HepG2 (cell line): ENCODE measurements at regions of chr14 and their contacts with region 1.

Region 1: GRCh38 chr14:59464486-59465315 is 479 bp downstream of the GPR135 start:
- DNase-seq: peak; percentile 24
- ATAC-seq: peak; percentile 85
- H3K4me3 ChIP-seq: peak overlapping the region; percentile 53 to 77 (median 77)
- H3K27ac ChIP-seq: peak overlapping the region; percentile 64
- H3K4me1 ChIP-seq: peaks cover 22% of the 10 kb centered on the region
- H3K27me3 ChIP-seq: no peaks in the 10 kb centered on the region
- CTCF ChIP-seq: peak; percentile 4
- EP300 ChIP-seq: no peak
- POLR2A ChIP-seq: no peak
- RAD21 ChIP-seq: 0 out of 2 replicates have a peak, but pooled peaks have one; percentile 17

Region 2: GRCh38 chr14:59483900-59484638 is 19.4 kb after region 1 on chr14 and contains the starts of genes JKAMP and L3HYPDH:
- CTCF ChIA-PET with region 1: no interaction called
- POLR2A ChIA-PET with region 1: interaction called, 18 read pairs
- in situ Hi-C with region 1: no loop called
- intact Hi-C with region 1: loop called (anchors 1 kb)
- DNase-seq: peak; percentile 92
- ATAC-seq: peak; percentile 93
- H3K4me3 ChIP-seq: peak within 1 kb of the TSS; percentile 78 to 87 (median 83)
- H3K27ac ChIP-seq: peak within 1 kb of the TSS; percentile 96
- H3K4me1 ChIP-seq: peaks cover 46% of the 10 kb centered on the region
- H3K27me3 ChIP-seq: peaks cover 0 to 4% of the 10 kb centered on the region in 2 experiments; a peak in 1 of 5 replicates
- CTCF ChIP-seq: peak; percentile 83
- EP300 ChIP-seq: no peak
- POLR2A ChIP-seq: peak; percentile 94 to 98
- RAD21 ChIP-seq: peak; percentile 68
- total RNA-seq, gene JKAMP: 41.6 and 56.4 TPM in 2 replicates
- total RNA-seq, gene L3HYPDH: 22.4 and 30.5 TPM in 2 replicates

Region 3: DNA sequence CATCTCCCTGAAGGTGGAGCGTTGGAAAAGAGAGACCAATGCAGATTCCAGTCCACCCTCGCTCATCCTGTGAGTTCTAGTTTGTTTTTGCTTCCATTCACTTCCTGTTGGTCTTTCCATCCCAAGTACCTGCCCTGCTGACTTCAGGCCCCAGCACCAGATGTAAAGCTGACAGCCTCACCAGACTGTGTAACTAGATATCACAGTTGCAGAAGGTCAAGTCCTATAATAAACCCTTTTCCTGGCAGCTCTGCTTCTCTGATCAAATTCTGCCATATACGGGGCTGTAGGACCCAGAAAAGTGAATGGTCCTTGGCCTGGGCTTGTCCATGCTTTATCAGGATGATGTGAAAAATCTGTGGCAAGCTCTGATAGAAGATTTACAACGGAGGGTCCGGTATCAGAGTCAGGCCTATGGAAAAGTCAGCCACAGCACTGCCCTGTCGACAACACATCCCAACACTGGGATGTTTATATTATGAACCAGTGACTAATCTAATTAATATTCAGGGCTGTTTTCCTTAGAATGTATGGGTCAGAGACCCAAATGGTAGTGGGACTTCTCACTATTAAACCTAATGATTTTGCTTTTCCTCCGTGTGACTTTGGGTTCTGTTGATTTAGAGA is 69.8 kb after region 1 on chr14:
- CTCF ChIA-PET with region 1: no interaction called
- POLR2A ChIA-PET with region 1: no interaction called
- in situ Hi-C with region 1: no loop called
- intact Hi-C with region 1: no loop called
- DNase-seq: no peak
- ATAC-seq: no peak
- H3K4me3 ChIP-seq: no peak overlapping the region
- H3K27ac ChIP-seq: no peak overlapping the region
- H3K4me1 ChIP-seq: no peaks in the 10 kb centered on the region
- H3K27me3 ChIP-seq: peaks cover 0 to 6% of the 10 kb centered on the region in 2 experiments; a peak in 2 of 5 replicates
- CTCF ChIP-seq: no peak
- EP300 ChIP-seq: no peak
- POLR2A ChIP-seq: no peak
- RAD21 ChIP-seq: no peak